PC-9 (cell line): ENCODE measurements at regions of chr10 and their contacts with region 1.

Region 1: GRCh38 chr10:69644658-69645295 is 14.7 kb downstream of the FAM241B start:
- DNase-seq: peak; percentile 46 to 68
- H3K4me3 ChIP-seq: no peak overlapping the region
- H3K27ac ChIP-seq: no peak overlapping the region
- H3K4me1 ChIP-seq: peaks cover 10% of the 10 kb centered on the region
- H3K27me3 ChIP-seq: peaks cover 35% of the 10 kb centered on the region
- CTCF ChIP-seq: peak; percentile 95

Region 2: DNA sequence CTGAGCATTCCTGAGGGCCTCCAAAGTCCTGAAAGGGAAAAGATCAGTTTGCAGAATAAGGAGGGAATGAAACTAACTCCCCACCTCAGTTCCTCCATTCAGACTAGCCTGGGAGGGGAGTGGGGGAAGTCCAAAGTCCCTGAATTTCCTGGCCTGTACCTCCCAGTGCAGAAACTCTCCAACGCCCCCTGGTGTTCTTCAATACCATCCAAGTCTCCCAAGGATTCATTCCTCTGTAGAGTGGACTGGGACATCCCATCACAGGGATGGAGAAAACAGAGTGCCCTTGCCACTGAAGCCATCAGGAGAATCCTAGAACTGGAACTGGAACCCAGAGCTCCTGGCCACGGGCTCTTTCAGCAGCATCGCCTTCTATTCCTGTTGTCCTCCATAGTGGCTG is 155.3 kb after region 1 on chr10:
- CTCF ChIA-PET with region 1: interaction called, 3 read pairs
- POLR2A ChIA-PET with region 1: no interaction called
- intact Hi-C with region 1: loop called (anchors 1 kb)
- DNase-seq: peak; percentile 48 to 49
- H3K4me3 ChIP-seq: no peak overlapping the region
- H3K27ac ChIP-seq: no peak overlapping the region
- H3K4me1 ChIP-seq: peaks cover 32% of the 10 kb centered on the region; the same call in 1 of the 2 replicates
- H3K27me3 ChIP-seq: no peaks in the 10 kb centered on the region
- CTCF ChIP-seq: peak; percentile 82

Region 3: GRCh38 chr10:69835875-69836730 is 191.3 kb after region 1 on chr10:
- CTCF ChIA-PET with region 1: no interaction called
- POLR2A ChIA-PET with region 1: no interaction called
- intact Hi-C with region 1: no loop called
- DNase-seq: peak in 1 of 2 experiments; percentile 15
- H3K4me3 ChIP-seq: no peak overlapping the region
- H3K27ac ChIP-seq: no peak overlapping the region
- H3K4me1 ChIP-seq: peaks cover 33% of the 10 kb centered on the region
- H3K27me3 ChIP-seq: no peaks in the 10 kb centered on the region
- CTCF ChIP-seq: no peak